ENCODE measurements at regions of chr11 and their contacts with region 1.

Region 1: GRCh38 chr11:66371627-66372415 is at the start of gene SLC29A2:
- DNase-seq: peak; percentile 53 to 85 (median 80)
- ATAC-seq: peak; percentile 89
- H3K4me3 ChIP-seq: peak within 1 kb of the TSS; percentile 72
- H3K4me3 Mint-ChIP-seq: peak within 1 kb of the TSS; percentile 81 to 96 (median 88)
- H3K27ac ChIP-seq: peak within 1 kb of the TSS; percentile 83
- H3K27ac Mint-ChIP-seq: peak within 1 kb of the TSS; percentile 79 to 95 (median 90)
- H3K4me1 ChIP-seq: peaks cover 4 to 8% of the 10 kb centered on the region in 2 donors
- H3K4me1 Mint-ChIP-seq: peaks cover 0 to 24% (median 13%) of the 10 kb centered on the region in 7 donors
- H3K27me3 ChIP-seq: no peaks in the 10 kb centered on the region
- H3K27me3 Mint-ChIP-seq: peaks cover 0 to 3% (median 0%) of the 10 kb centered on the region in 5 donors
- total RNA-seq, gene SLC29A2: 6.0 to 18.9 (median 12.0) TPM

Region 2: GRCh38 chr11:65911682-65912568 is 459.9 kb before region 1 on chr11:
- CTCF ChIA-PET with region 1: no interaction called
- POLR2A ChIA-PET with region 1: no interaction called
- intact Hi-C with region 1: no loop called
- DNase-seq: no peak
- ATAC-seq: no peak
- H3K4me3 ChIP-seq: no peak overlapping the region
- H3K4me3 Mint-ChIP-seq: no peak overlapping the region
- H3K27ac ChIP-seq: no peak overlapping the region
- H3K27ac Mint-ChIP-seq: peak overlapping the region in 1 of 9 donors; percentile 5
- H3K4me1 ChIP-seq: peaks cover 2 to 5% of the 10 kb centered on the region in 2 donors
- H3K4me1 Mint-ChIP-seq: peaks cover 18 to 30% (median 21%) of the 10 kb centered on the region in 7 donors
- H3K27me3 ChIP-seq: no peaks in the 10 kb centered on the region
- H3K27me3 Mint-ChIP-seq: peaks cover 0 to 9% (median 0%) of the 10 kb centered on the region in 5 donors

Region 3: GRCh38 chr11:66386171-66387069 is 14.6 kb after region 1 on chr11:
- CTCF ChIA-PET with region 1: interaction called, 14 read pairs
- POLR2A ChIA-PET with region 1: interaction called, 32 read pairs
- intact Hi-C with region 1: loop called (anchors 1 kb)
- DNase-seq: peak; percentile 59 to 83 (median 75)
- ATAC-seq: peak; percentile 83
- H3K4me3 ChIP-seq: no peak overlapping the region
- H3K4me3 Mint-ChIP-seq: peak overlapping the region; percentile 5 to 71 (median 40)
- H3K27ac ChIP-seq: no peak overlapping the region
- H3K27ac Mint-ChIP-seq: peak overlapping the region in 4 of 9 donors; percentile 0 to 20 (median 6)
- H3K4me1 ChIP-seq: peaks cover 4 to 8% of the 10 kb centered on the region in 2 donors
- H3K4me1 Mint-ChIP-seq: peaks cover 0 to 12% (median 7%) of the 10 kb centered on the region in 7 donors
- H3K27me3 ChIP-seq: no peaks in the 10 kb centered on the region
- H3K27me3 Mint-ChIP-seq: peaks cover 0 to 15% (median 0%) of the 10 kb centered on the region in 5 donors

Measured in naive thymus-derived CD4-positive, alpha-beta T cell (primary cell).